Prostate gland (tissue), 2 donors: ENCODE measurements at regions of chr1 and their contacts with region 1.

Region 1: DNA sequence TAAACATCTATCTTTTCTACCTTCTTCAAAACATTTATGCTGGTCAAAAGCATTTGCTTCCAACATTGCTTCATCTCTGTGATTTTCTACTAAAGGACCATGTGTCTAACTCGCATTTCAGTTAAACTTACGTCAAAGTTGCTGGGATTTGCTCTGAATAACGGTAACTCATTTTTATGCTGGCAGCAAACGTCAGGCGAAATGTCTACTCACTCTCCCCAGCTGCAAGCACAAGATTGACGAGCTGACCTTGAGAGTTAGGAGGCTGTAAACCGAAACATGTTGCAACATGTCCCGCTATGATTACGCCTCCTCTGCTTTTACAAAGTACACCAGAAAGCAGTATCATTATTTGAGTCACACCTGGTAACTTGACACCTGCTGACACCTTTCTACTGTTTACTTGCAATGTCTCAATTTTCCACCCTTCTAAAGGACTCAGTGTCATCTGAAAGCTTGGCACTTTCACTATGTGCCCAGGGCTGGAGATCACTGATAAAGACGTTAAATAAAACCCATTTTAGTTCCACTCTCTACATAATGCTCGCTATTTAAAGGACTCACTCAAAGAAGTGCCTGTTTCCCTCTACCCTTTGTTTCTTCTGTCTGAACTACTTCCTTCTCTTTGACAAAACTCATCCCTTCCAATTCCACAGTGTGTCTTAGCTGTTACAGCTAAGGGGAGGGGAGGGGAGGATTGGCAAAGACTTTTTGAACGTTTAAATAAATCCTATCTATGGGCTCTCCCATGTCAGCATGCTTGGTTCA is 111.9 kb downstream of the PTPN14 start:
- DNase-seq: peak; percentile 78
- H3K4me3 ChIP-seq: peak overlapping the region in 1 of 2 donors; percentile 4
- H3K27ac ChIP-seq: peak overlapping the region; percentile 34 to 53
- H3K4me1 ChIP-seq: no peaks in the 10 kb centered on the region
- H3K27me3 ChIP-seq: no peaks in the 10 kb centered on the region
- CTCF ChIP-seq: no peak
- POLR2A ChIP-seq: no peak

Region 2: DNA sequence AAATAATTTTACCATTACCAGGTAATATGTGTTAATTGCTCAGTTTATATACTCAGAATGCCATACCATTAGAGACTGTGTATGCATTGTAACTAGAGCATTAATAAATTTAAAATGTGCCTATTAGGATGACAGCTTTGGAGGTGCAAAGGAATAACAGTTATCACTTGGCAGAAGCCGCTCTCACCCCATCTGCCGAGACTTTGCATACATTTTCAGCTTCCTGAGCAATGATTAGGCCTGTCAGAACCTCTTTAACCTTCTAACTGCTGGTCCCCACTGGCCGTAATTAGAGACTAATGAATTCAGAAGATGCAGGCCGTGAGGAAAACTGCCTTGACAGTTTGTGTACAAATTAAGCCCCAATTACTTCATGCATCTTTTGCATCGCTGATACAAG is 609.8 kb before region 1 on chr1:
- intact Hi-C with region 1: no loop called
- DNase-seq: no peak
- H3K4me3 ChIP-seq: no peak overlapping the region
- H3K27ac ChIP-seq: no peak overlapping the region
- H3K4me1 ChIP-seq: no peaks in the 10 kb centered on the region
- H3K27me3 ChIP-seq: no peaks in the 10 kb centered on the region
- CTCF ChIP-seq: no peak
- POLR2A ChIP-seq: no peak

Region 3: DNA sequence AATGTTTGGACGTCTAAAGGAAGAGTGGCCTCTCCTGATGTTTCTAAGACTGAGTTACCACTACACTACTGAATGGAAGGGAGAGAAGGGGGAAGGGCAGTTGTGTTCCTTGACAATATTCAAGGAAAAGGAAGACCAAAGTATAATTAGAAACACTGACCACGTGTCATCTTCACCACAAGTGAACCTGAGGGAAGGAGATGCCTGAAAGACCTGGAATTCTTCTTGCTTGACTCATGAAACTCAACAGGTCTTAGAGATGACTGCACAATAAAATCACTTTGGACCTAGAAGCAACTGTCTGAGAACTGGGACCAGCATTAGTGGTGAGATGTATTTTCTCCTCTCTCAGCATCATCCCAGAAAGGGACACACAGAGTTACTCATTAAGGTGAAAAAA is 55.2 kb after region 1 on chr1:
- intact Hi-C with region 1: loop called (anchors 10 kb)
- DNase-seq: no peak
- H3K4me3 ChIP-seq: no peak overlapping the region
- H3K27ac ChIP-seq: no peak overlapping the region
- H3K4me1 ChIP-seq: no peaks in the 10 kb centered on the region
- H3K27me3 ChIP-seq: no peaks in the 10 kb centered on the region
- CTCF ChIP-seq: no peak
- POLR2A ChIP-seq: no peak